OCI-LY7 (cell line): ENCODE measurements at regions of chrX and their contacts with region 1.

Region 1: GRCh38 chrX:118807151-118808017 is 16.2 kb upstream of the ZCCHC12 start:
- DNase-seq: peak; percentile 39
- H3K4me3 ChIP-seq: no peak overlapping the region
- H3K27ac ChIP-seq: no peak overlapping the region
- H3K4me1 ChIP-seq: no peaks in the 10 kb centered on the region
- CTCF ChIP-seq: peak; percentile 73

Region 2: GRCh38 chrX:118459494-118459893 is 347.9 kb before region 1 on chrX:
- CTCF ChIA-PET with region 1: no interaction called
- POLR2A ChIA-PET with region 1: no interaction called
- intact Hi-C with region 1: loop called (anchors 2 kb)
- DNase-seq: peak; percentile 45
- H3K4me3 ChIP-seq: no peak overlapping the region
- H3K27ac ChIP-seq: no peak overlapping the region
- H3K4me1 ChIP-seq: no peaks in the 10 kb centered on the region
- CTCF ChIP-seq: peak; percentile 78

Region 3: DNA sequence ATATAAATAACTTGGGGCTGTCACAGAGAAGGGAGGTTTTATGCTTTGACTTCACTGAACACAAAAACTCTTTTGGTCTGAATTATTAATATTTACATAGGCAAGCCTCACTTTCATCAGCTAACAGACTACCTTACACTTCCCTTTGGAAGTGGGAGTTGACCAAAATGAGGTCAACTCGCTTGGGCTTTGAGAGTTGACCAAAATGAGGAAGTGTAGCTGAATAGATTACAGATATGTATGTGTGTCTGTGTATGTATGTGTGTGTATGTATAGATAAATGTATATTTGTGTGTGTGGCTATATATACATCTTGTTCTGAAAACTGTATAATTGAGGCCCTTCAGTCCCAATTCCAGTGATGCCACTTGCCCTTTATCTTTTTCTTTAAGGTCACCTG is 193.2 kb before region 1 on chrX:
- CTCF ChIA-PET with region 1: no interaction called
- POLR2A ChIA-PET with region 1: no interaction called
- intact Hi-C with region 1: loop called (anchors 10 kb)
- DNase-seq: no peak
- H3K4me3 ChIP-seq: no peak overlapping the region
- H3K27ac ChIP-seq: no peak overlapping the region
- H3K4me1 ChIP-seq: no peaks in the 10 kb centered on the region
- CTCF ChIP-seq: no peak